Ovary (tissue), 10 donors: ENCODE measurements at regions of chr1 and their contacts with region 1.

Region 1: DNA sequence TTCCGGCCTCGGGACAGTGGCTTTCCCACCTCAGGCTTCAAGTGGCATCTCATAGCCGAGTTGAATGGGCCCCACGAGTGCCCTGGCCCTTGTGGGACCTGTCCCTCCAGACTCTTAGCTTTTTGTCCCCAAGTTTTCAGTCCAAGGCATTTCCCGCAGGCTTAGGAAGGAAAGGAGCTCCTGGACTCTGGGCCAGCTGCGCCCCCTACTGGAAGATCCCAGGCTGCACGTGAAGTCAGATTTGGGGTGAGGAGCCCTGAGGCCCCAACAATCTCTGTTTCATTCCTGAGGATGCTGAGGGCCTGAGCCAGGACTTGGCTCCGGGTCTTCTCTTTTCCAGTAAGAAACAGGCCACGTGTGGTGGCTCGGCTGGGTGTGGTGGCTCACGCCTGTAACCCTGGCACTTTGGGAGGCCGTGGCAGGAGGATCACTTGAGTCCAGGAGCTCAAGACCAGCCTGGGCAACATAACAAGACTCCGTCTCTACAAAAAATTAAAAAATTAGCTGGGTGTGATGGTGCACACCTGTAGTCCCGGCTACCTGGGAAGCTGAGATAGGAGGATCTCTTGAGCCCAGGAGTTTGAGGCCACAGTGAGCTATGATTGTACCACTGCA is 67.4 kb downstream of the ARHGEF10L start:
- DNase-seq: peak; percentile 65 to 84 (median 79)
- H3K4me3 ChIP-seq: no peak overlapping the region
- H3K27ac ChIP-seq: no peak overlapping the region
- H3K4me1 ChIP-seq: peaks cover 2% of the 10 kb centered on the region
- H3K27me3 ChIP-seq: no peaks in the 10 kb centered on the region
- CTCF ChIP-seq: peak; percentile 79 to 84 (median 80)
- EP300 ChIP-seq: no peak
- POLR2A ChIP-seq: no peak

Region 2: DNA sequence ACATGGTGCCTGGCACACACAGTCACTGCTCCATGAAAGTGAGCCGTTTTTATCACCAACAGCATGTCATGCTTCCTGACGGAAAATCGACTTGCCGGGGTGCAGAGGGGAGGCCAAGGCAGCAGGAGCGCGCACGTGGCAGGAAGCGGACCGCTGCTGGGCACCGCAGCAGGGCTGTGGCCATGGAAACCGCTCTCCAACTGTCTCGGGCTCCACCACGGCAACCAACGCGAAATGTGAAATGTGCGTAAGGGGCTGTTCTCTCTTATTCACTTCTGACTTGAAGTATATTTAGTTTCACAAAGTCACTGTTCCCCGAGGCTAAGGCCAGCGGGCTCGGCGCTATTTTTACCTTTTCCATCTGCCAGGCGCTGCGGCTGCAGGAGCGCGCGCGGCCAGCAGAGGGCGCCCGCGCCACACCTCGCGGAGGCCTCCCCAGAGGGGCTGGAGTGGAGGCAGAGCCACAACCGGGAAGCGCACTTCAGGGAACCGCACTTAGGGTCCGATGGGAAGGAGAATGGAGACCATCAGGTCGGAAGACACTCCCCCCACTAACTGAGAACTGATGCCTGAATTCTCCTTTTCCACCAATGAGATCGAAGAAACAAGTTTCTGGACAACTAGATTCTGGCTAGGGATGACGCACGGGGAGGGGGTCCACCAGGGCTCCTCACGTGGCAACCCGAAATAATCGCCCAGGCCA is 187.2 kb before region 1 on chr1:
- intact Hi-C with region 1: loop called in 3 of 4 experiments (anchors 5 to 10 kb)
- DNase-seq: peak; percentile 67 to 87 (median 81)
- H3K4me3 ChIP-seq: no peak overlapping the region
- H3K27ac ChIP-seq: no peak overlapping the region
- H3K4me1 ChIP-seq: peaks cover 17% of the 10 kb centered on the region
- H3K27me3 ChIP-seq: no peaks in the 10 kb centered on the region
- CTCF ChIP-seq: peak; percentile 89 to 99 (median 93)
- EP300 ChIP-seq: no peak
- POLR2A ChIP-seq: no peak

Region 3: DNA sequence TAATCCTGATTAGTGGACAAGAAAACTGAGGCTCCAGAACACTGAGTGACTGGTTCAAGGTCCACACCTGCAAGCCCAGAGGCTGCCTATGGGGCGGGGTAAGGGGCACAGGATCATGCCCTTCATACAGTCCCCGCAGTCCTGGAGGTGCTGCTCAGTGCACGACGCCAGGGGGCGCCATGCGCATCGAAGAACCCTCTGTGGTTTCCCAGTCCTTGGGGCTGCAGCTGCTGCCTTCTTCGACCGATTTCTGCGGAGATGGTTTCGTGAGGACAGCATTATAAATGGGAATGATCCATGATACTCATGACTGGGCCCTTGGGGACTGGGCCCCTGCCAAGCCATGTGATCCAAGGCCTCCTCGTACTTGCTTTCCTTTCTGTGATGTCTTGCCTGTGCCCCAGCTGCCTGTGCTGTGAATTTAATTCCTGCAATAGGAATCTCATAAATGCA is 104.6 kb before region 1 on chr1:
- intact Hi-C with region 1: loop called (anchors 1 to 5 kb)
- DNase-seq: peak; percentile 77 to 91 (median 84)
- H3K4me3 ChIP-seq: no peak overlapping the region
- H3K27ac ChIP-seq: no peak overlapping the region
- H3K4me1 ChIP-seq: peaks cover 3% of the 10 kb centered on the region
- H3K27me3 ChIP-seq: no peaks in the 10 kb centered on the region
- CTCF ChIP-seq: peak; percentile 79 to 88 (median 81)
- EP300 ChIP-seq: no peak
- POLR2A ChIP-seq: peak; percentile 11

Region 4: DNA sequence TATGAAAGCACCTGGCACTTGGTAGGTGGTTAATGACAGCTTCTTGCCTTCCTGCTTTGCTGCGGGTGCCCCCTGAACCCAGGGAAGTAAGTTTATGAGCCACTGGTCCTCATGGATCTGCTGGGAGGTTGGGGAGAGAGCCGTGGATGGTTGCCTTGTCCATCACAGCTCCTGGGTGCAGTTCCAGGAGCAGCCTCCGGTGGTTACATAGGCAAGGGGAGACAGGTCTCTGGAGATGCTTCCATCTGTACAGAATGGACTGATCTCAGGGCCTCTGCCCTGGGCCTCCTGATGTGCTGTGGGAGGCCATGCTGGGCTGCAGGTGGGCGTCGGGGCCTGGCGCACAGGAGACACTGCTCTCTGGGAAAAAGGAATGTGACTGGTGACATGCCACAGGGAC is 99.0 kb before region 1 on chr1:
- intact Hi-C with region 1: loop called in 3 of 4 experiments (anchors 2 to 5 kb)
- DNase-seq: no peak
- H3K4me3 ChIP-seq: no peak overlapping the region
- H3K27ac ChIP-seq: no peak overlapping the region
- H3K4me1 ChIP-seq: no peaks in the 10 kb centered on the region
- H3K27me3 ChIP-seq: no peaks in the 10 kb centered on the region
- CTCF ChIP-seq: no peak
- EP300 ChIP-seq: no peak
- POLR2A ChIP-seq: no peak